K562 (cell line): ENCODE measurements at regions of chr6 and their contacts with region 1.

Region 1: DNA sequence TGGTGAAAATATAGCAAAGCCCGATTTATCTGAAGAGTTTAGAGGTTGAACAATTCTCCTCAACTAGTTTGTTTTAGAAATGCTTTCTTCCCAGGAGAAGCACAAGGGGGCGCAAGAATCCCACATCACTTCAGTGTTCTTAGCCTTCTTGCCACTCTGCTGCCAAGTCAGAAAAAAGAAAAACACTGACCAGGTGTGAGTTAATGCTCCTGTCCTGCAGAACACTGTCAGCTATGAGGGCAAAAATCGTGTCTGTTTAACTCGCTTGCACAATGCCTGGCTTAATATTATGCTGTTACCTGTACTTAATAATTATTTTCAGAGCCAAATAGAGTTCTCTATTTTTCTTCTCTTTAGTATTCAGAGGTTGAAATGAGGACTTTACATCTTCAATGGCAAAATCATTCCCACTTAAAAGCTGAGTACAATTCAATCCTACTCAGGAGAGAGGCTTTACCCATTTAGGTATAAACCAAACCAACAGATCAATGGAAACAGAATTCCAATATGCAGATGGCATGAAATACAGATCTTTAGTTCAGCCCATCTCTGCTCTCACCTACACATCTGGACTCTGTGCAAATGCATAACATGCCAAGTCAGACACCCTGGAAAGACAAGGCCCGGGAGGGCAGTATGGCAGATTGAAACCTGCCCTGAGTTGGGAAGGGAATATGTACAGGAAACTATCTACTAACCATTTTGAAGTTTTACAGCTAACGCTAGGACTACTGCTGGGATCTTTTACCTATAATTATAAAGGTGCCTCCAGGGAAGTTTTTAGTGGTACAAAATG is 71.4 kb upstream of the TULP1 start:
- DNase-seq: peak; percentile 39 to 81 (median 46)
- ATAC-seq: peak; percentile 92
- H3K4me3 ChIP-seq: no peak overlapping the region
- H3K27ac ChIP-seq: no peak overlapping the region
- H3K4me1 ChIP-seq: no peaks in the 10 kb centered on the region
- H3K27me3 ChIP-seq: no peaks in the 10 kb centered on the region
- CTCF ChIP-seq: peak; percentile 83 to 93 (median 85)
- EP300 ChIP-seq: no peak
- POLR2A ChIP-seq: no peak
- RAD21 ChIP-seq: peak; percentile 97 to 98

Region 2: GRCh38 chr6:35688581-35689322 is 104.7 kb after region 1 on chr6 and contains the start of gene FKBP5:
- CTCF ChIA-PET with region 1: no interaction called
- POLR2A ChIA-PET with region 1: no interaction called
- in situ Hi-C with region 1: no loop called
- intact Hi-C with region 1: loop called (anchors 5 kb)
- DNase-seq: peak; percentile 98 to 100 (median 99)
- ATAC-seq: peak; percentile 92
- H3K4me3 ChIP-seq: peak within 1 kb of the TSS; percentile 96
- H3K27ac ChIP-seq: peak within 1 kb of the TSS; percentile 86
- H3K4me1 ChIP-seq: peaks cover 5 to 24% of the 10 kb centered on the region in 2 experiments; a peak in 4 of 5 replicates
- H3K27me3 ChIP-seq: no peaks in the 10 kb centered on the region
- CTCF ChIP-seq: no peak; a peak in 1 of 6 replicates
- EP300 ChIP-seq: no peak
- POLR2A ChIP-seq: peak; percentile 70
- RAD21 ChIP-seq: peak in 1 of 2 experiments; percentile 3; a peak in 1 of 4 replicates
- polyA plus RNA-seq, gene FKBP5: 32.7 to 46.1 TPM

Region 3: DNA sequence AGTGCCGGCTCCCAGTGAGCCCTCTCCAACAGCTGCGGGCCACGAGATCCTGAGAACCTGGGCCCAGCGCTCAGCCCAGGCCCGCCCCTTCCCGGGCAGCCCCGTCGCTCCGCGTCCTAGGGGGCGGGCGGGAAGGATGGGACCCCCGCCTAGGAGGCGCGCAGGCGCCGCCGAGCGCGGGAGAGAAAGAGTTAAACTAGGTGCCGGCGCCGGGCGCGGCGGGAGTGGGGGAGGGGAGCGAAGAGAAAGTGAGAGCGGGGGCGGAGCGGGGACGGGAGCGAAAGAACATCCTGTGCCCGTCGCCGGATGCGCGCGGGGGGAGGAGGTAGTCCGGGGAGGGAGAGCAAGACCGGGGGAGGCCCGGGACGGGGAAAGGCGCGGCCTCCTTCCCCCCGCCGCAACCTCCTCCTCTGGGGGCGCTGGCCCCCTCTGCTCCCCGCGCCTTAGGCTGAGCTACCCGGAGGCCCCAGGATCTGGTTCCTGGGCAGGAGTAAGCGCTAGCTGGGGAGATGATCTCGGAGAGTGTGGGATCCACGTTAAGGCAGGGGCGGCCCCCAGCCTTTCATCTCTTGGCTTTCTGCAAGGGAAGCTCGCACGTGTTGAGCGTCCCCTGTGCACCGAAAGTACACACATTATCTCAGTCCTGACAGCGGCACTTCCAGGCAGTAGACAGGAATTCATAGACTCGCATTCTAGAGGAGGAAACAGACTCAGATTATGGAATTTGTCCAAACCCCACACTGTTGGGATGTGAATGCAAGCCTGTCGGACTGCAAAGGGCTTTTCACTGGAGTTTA is 147.8 kb after region 1 on chr6:
- CTCF ChIA-PET with region 1: interaction called, 195 read pairs
- POLR2A ChIA-PET with region 1: interaction called, 10 read pairs
- in situ Hi-C with region 1: loop called (anchors 5 kb)
- intact Hi-C with region 1: loop called (anchors 1 kb)
- DNase-seq: peak; percentile 97 to 98 (median 98)
- ATAC-seq: peak; percentile 75
- H3K4me3 ChIP-seq: peak overlapping the region; percentile 77
- H3K27ac ChIP-seq: peak overlapping the region; percentile 85
- H3K4me1 ChIP-seq: peaks cover 46 to 63% of the 10 kb centered on the region in 2 experiments
- H3K27me3 ChIP-seq: no peaks in the 10 kb centered on the region
- CTCF ChIP-seq: peak; percentile 30 to 50 (median 42)
- EP300 ChIP-seq: peak; percentile 65; the same call in 1 of the 2 replicates
- POLR2A ChIP-seq: peak; percentile 89
- RAD21 ChIP-seq: peak; percentile 12 to 30; a peak in 1 of 4 replicates

Region 4: DNA sequence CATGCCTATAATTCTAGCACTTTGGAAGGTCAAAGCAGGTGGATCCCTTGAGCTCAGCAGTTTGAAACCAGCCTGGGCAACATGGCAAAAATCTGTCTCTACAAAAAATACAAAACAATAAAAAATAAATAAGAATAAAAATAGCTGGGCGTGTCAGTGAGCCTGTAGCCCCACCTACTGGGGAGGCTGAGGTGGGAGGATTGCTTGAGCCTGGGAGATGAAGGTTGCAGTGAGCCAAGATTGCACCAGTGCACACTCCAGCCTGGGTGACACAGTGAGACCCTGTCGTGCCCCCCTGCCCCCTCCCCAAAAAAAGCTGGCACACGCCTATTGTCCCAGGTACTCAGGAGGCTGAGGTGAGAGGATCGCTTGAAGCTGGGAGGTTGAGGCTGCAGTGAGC is 371.9 kb after region 1 on chr6:
- CTCF ChIA-PET with region 1: interaction called, 3 read pairs
- POLR2A ChIA-PET with region 1: no interaction called
- in situ Hi-C with region 1: no loop called
- intact Hi-C with region 1: loop called (anchors 10 kb)
- DNase-seq: peak in 1 of 4 experiments; percentile 27
- ATAC-seq: peak; percentile 74
- H3K4me3 ChIP-seq: no peak overlapping the region
- H3K27ac ChIP-seq: no peak overlapping the region
- H3K4me1 ChIP-seq: no peaks in the 10 kb centered on the region
- H3K27me3 ChIP-seq: peaks cover 39 to 40% of the 10 kb centered on the region in 2 experiments
- CTCF ChIP-seq: peak; percentile 65 to 71 (median 69)
- EP300 ChIP-seq: no peak
- POLR2A ChIP-seq: no peak
- RAD21 ChIP-seq: peak; percentile 27 to 60; a peak in 3 of 4 replicates